ENCODE measurements at regions of chr1 and their contacts with region 1.

Region 1: DNA sequence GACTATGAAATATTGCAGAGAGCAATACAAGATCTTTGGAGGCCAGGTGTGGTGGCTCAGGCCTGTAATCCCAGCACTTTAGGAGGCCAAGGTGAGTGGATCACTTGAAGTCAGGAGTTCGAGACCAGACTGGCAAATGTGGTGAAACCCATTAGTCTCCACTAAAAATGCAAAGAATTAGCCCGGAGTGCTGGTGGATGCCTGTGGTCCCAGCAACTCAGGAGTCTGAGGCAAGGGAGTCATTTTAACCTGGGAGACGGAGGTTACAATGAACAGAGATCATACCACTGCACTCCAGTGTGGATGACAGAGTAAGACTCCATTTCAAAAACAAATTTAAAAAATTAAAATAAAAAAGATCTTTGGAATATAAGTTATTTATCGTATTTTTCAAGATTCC is 76.6 kb downstream of the PRKAB2 start:
- DNase-seq: no peak
- ATAC-seq: no peak
- H3K4me3 ChIP-seq: no peak overlapping the region
- H3K27ac ChIP-seq: no peak overlapping the region
- H3K4me1 ChIP-seq: 0 out of 2 replicates have a peak, but pooled peaks cover 4% of the 10 kb centered on the region
- H3K27me3 ChIP-seq: peaks cover 0 to 11% of the 10 kb centered on the region in 2 experiments; a peak in 3 of 5 replicates
- CTCF ChIP-seq: no peak
- EP300 ChIP-seq: no peak
- POLR2A ChIP-seq: no peak
- RAD21 ChIP-seq: no peak

Region 2: GRCh38 chr1:147072370-147073061 is 23.2 kb before region 1 on chr1:
- CTCF ChIA-PET with region 1: no interaction called
- POLR2A ChIA-PET with region 1: no interaction called
- in situ Hi-C with region 1: no loop called
- intact Hi-C with region 1: loop called (anchors 2 kb)
- DNase-seq: no peak
- ATAC-seq: no peak
- H3K4me3 ChIP-seq: no peak overlapping the region
- H3K27ac ChIP-seq: no peak overlapping the region
- H3K4me1 ChIP-seq: no peaks in the 10 kb centered on the region
- H3K27me3 ChIP-seq: peaks cover 0 to 44% of the 10 kb centered on the region in 2 experiments; a peak in 3 of 5 replicates
- CTCF ChIP-seq: no peak
- EP300 ChIP-seq: no peak
- POLR2A ChIP-seq: no peak
- RAD21 ChIP-seq: no peak

Measured in HepG2 (cell line).